ENCODE measurements at regions of chr21 and their contacts with region 1.

Region 1: GRCh38 chr21:31326522-31327242 is 17.4 kb downstream of the TIAM1 start:
- DNase-seq: no peak

Region 2: DNA sequence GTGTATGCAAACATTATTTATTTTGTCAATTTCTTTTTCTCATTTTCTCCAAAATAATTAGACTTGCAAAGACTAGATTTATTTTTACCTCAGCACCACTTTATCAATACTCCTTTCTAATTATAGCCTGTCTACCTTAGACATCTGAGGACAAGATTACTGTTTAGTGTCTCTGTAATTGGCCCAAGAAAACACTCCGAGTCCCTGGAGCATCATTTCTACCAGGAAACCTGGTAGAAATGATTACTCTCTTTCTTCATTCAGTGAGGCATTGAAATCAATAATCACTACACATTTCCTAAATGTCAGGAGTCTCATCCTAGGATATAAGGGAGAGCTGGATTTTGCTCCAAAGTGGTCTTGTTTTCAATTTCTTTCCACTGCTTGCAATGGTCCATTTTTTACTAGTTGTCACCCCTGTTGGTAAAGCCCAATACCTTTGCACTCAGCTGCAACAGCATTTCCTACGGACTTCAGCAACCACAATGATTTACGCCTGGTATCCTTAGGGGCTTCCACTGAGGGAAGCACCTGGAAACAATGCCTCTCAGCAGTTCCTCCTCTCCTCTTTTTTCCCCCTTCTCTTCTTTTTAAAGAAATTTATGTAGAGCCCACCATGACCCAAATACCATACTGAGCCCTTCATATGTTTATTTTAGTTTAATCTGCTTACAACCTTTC is 1451.5 kb before region 1 on chr21:
- intact Hi-C with region 1: loop called in 1 of 2 experiments (anchors 5 kb)
- DNase-seq: no peak

Measured in posterior vena cava (tissue), 2 donors.